MCF 10A (cell line): ENCODE measurements at regions of chr21 and their contacts with region 1.

Region 1: GRCh38 chr21:36330904-36331303 is 10.9 kb downstream of the MORC3 start:
- DNase-seq: peak; percentile 67
- H3K4me3 Mint-ChIP-seq: no peak overlapping the region
- H3K27ac Mint-ChIP-seq: peak overlapping the region; percentile 54
- H3K4me1 Mint-ChIP-seq: peaks cover 10% of the 10 kb centered on the region
- H3K27me3 Mint-ChIP-seq: no peaks in the 10 kb centered on the region
- CTCF ChIP-seq: peak; percentile 57

Region 2: DNA sequence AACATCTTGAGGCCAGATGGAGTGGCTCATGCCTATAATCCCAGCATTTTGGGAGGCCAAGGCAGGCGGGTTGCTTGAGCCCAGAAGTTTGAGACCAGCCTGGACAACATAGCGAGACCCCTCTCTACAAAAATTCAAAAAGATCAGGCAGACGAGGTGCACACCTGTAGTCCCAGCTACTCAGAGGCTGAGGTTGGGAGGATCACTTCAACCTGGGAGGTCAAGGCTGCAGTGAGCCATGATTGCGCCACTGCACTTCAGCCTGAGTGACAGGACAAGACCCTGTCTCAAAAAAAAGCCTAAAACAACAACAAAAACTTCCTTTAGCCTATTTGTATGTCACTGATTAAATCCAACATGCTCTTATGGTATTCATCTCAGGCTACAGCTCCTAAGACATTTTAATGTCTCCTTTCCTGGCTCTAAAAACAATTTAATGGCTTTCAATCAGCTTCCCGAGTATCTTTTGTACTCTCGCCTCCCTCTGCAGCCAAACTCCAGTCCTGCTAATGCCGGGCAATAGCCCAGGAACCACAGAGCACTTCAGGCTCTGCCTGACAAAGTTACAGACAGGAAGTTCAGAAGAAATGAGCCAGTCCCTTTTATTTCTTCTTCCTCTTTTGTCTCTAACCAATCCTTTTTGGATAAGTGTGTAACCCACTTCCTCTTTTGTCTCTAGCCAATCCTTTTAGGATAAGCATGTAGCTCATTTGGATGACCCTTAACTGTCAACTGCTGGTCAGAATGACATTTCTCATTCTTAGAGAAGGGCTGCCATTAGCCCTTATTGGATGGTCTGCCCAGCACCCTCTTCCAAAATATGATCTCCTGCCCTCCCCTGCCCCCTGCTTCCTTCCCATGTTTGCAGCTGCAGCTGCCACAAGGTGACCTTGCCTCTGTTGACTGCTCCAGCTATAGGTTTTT is 180.9 kb before region 1 on chr21:
- CTCF ChIA-PET with region 1: interaction called, 39 read pairs
- POLR2A ChIA-PET with region 1: interaction called, 5 read pairs
- intact Hi-C with region 1: loop called (anchors 1 kb)
- DNase-seq: no peak
- H3K4me3 Mint-ChIP-seq: no peak overlapping the region
- H3K27ac Mint-ChIP-seq: no peak overlapping the region
- H3K4me1 Mint-ChIP-seq: peaks cover 10% of the 10 kb centered on the region
- H3K27me3 Mint-ChIP-seq: no peaks in the 10 kb centered on the region
- CTCF ChIP-seq: no peak

Region 3: DNA sequence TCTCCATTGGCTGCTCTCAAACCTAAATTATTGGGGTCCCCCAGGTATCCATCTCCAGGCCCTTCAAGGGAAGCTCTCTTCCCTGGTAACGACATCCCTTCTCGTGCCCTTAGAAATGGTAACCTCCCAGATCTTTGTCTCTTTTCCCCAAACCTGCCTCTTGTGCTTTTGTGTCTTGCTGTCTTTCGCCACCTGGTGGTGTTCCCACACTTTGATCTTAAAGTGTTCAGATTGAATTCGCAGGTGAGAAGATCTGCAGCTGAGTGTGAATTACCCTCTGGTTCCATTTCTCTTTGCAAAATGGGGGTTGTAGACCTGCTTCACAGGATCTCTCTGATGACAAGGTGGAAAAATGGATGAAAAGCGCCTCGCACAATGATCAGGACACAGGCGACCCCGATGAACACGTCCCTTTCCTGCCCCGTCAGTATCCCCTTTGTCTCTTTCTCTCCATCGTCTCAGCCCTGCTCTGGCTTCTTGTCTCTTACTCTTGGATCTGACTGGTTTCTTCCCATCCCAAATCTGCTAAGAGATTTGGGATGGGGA is 121.2 kb before region 1 on chr21:
- CTCF ChIA-PET with region 1: interaction called, 14 read pairs
- POLR2A ChIA-PET with region 1: interaction called, 15 read pairs
- intact Hi-C with region 1: loop called (anchors 1 kb)
- DNase-seq: peak; percentile 86
- H3K4me3 Mint-ChIP-seq: peak overlapping the region; percentile 61
- H3K27ac Mint-ChIP-seq: peak overlapping the region; percentile 80
- H3K4me1 Mint-ChIP-seq: peaks cover 16% of the 10 kb centered on the region
- H3K27me3 Mint-ChIP-seq: no peaks in the 10 kb centered on the region
- CTCF ChIP-seq: peak; percentile 50

Region 4: GRCh38 chr21:36260030-36260787 is 70.7 kb before region 1 on chr21:
- CTCF ChIA-PET with region 1: interaction called, 3 read pairs
- POLR2A ChIA-PET with region 1: no interaction called
- intact Hi-C with region 1: loop called (anchors 5 kb)
- DNase-seq: peak; percentile 72
- H3K4me3 Mint-ChIP-seq: peak overlapping the region; percentile 75
- H3K27ac Mint-ChIP-seq: peak overlapping the region; percentile 82
- H3K4me1 Mint-ChIP-seq: no peaks in the 10 kb centered on the region
- H3K27me3 Mint-ChIP-seq: no peaks in the 10 kb centered on the region
- CTCF ChIP-seq: peak; percentile 54